Astrocyte of the cerebellum (primary cell): ENCODE measurements at regions of chr6 and their contacts with region 1.

Region 1: DNA sequence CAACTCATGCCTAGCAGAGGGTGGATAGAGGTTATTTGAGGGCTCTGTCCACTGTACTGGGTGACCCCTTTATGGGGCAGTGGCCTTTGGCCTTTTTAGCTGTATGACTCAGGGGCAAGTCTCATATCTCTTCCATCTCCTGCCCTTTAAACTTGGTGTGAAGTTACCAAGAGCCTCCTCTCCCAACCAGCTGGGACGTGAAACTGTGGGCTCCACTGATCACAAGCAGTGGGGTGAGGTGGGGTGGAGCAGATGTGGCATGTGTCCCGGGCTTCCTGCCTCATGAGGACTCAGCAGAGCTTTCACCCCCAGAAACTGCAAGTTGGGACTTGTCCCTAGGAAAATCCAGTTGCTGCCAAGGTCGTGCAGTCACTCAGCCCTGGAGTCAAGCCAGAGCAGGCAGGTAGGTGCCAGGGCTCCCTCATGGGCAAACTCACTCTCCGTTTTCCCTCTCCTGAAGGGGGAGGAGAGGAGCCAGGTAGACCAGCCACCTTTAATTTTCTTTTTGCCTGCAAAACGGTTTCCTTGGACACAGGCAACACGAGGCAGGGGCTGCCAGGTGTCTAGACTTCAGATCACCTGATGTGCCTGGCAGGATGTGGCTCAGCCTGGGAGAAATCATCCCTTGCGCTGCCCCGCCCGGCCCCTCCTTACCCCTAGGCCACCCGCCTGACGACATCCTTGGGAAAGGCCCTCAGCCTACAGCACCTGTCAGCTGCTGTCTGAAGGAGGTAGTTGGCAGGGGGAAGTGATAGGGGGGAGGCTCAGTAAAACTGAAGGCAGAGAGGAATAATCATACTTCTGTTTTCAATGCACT is 4.0 kb downstream of the CDKN1A start:
- DNase-seq: no peak
- H3K4me3 ChIP-seq: peak overlapping the region; percentile 98
- CTCF ChIP-seq: no peak

Region 2: GRCh38 chr6:36735110-36736071 is 52.9 kb after region 1 on chr6:
- in situ Hi-C with region 1: loop called (anchors 5 kb)
- DNase-seq: peak; percentile 38
- H3K4me3 ChIP-seq: no peak overlapping the region
- CTCF ChIP-seq: no peak